Colonic mucosa (tissue), 4 donors: ENCODE measurements at regions of chr6 and their contacts with region 1.

Region 1: GRCh38 chr6:136383268-136383937 is 93.8 kb upstream of the BCLAF1 start:
- DNase-seq: no peak
- H3K4me3 ChIP-seq: no peak overlapping the region
- H3K27ac ChIP-seq: no peak overlapping the region
- H3K4me1 ChIP-seq: no peaks in the 10 kb centered on the region
- H3K27me3 ChIP-seq: no peaks in the 10 kb centered on the region
- CTCF ChIP-seq: no peak

Region 2: DNA sequence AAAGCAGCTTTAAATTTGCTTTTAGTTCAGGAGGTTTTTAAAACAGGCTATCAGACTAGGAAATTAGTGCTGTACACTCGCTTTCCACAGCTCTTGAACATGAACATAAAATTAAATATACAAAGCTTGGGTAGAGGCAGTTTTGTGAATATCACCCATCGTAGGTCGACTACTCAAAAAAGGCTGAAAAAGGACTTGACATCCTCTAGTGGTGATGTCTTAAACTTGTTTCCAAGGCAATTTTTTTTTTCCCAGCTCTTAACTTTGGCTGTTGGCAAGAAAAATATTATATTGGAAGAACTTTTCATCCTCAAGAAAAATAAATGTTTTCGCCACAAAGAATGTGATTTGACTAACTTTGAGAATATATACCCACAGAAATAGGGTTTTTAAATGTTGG is 163.9 kb after region 1 on chr6:
- intact Hi-C with region 1: loop called (anchors 10 kb)
- DNase-seq: no peak
- H3K4me3 ChIP-seq: no peak overlapping the region
- H3K27ac ChIP-seq: no peak overlapping the region
- H3K4me1 ChIP-seq: peaks cover 4% of the 10 kb centered on the region
- H3K27me3 ChIP-seq: no peaks in the 10 kb centered on the region
- CTCF ChIP-seq: peak; percentile 53